ENCODE measurements at regions of chr14 and their contacts with region 1.

Region 1: DNA sequence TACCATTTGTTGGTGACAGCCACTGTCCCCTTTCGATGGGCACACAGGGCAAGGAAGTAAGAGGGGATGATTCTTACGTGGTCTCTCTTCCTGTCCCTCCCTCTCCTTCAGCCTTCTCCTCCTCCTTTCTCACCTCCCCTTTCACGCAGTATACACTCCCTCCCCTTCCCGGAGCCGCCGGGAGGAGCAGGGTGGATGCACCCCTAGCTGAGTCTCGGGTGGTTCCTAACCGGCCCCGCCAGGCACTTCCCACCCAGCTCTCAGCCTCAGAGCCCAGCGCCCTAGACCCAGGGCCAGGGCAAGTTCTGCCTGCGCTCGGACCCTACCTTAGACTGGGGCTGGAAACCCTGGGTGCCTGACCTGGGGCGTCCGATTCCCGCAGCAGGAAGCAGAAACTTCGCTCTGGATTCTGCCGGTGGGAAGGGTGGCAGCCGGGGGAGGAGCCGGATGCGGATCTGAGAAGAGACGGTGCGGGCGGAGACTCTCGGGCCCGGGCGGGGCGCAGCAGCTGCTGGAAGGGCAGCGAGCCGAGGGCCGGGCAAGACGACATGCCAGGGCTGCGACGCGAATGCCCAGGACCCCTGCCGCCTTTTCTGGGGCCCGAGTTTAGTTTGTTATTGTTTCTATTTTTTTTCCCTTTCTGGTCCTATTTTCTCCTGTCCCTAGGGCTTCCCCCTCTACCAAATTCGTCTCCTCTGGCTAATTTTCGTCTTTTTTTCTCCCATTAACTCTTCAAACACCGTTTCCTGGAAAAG is at the start of gene TEP1:
- DNase-seq: peak; percentile 69
- H3K4me3 Mint-ChIP-seq: peak within 1 kb of the TSS; percentile 100
- H3K27ac Mint-ChIP-seq: peak within 1 kb of the TSS; percentile 99
- H3K4me1 Mint-ChIP-seq: peaks cover 40% of the 10 kb centered on the region
- H3K27me3 Mint-ChIP-seq: no peaks in the 10 kb centered on the region
- total RNA-seq, gene TEP1: 39.3 and 41.9 TPM in 2 replicates

Region 2: GRCh38 chr14:20327005-20327869 is 86.0 kb before region 1 on chr14:
- intact Hi-C with region 1: loop called (anchors 1 kb)
- DNase-seq: peak; percentile 22
- H3K4me3 Mint-ChIP-seq: peak overlapping the region; percentile 9
- H3K27ac Mint-ChIP-seq: peak overlapping the region; percentile 13
- H3K4me1 Mint-ChIP-seq: peaks cover 52% of the 10 kb centered on the region
- H3K27me3 Mint-ChIP-seq: no peaks in the 10 kb centered on the region

Region 3: DNA sequence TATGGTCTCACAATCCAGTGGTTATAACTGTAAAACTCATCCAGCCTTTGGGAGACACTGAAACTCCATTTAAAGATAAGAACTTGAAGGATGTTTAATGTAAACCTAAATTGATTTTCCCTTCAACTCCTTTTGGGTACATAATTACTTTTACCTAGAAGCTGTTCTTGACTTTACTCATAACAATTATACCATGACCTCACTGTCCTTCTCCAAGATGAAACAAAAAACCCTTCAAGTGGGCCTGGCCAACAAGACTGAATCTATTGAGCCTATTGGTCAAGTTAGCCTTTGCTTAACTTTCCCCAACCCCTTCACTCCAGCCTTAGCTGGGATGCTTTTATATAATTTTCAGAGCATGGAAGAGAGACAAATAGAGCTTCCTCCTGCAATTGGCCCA is 47.3 kb before region 1 on chr14:
- intact Hi-C with region 1: loop called (anchors 1 kb)
- DNase-seq: no peak
- H3K4me3 Mint-ChIP-seq: no peak overlapping the region
- H3K27ac Mint-ChIP-seq: peak overlapping the region; percentile 15
- H3K4me1 Mint-ChIP-seq: peaks cover 10% of the 10 kb centered on the region
- H3K27me3 Mint-ChIP-seq: no peaks in the 10 kb centered on the region

Region 4: DNA sequence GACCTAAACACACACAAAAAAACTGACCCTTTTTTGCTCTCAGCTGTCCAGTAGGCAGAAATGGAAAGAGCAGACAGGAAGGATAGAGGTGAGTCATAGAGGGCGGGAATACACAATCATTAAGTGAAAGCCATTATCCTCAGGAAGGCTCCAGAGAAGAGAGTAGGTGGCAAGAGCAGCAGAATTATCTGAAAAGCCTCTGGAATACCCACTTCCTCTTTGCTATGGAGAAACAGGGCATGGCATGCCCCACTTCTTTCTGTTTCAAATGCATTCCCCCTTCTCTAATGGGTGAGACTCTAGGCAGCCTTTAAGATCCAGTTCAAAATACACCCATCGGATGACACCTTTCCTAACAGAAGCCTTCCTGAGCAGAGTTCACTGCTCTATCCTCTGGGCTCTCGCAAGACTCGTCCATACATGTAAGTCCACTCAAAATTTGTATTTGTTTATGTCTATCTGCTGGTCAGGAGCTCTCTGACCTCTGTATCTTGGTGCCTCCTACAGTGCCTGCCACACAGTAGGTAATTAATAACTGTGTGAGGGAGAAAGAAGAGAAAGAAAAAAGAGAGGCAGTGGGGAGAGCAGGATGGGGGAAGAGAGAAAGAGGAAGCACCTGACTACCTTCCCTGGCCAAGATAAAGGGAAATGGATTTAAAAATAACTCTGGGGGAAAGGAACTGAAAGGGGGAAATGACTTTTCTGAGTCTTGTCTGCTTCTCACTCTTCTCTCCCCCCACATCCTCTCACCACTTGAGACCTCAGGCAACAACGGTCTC is 14.2 kb after region 1 on chr14:
- intact Hi-C with region 1: loop called (anchors 1 kb)
- DNase-seq: no peak
- H3K4me3 Mint-ChIP-seq: peak overlapping the region; percentile 13
- H3K27ac Mint-ChIP-seq: peak overlapping the region; percentile 83
- H3K4me1 Mint-ChIP-seq: peaks cover 27% of the 10 kb centered on the region
- H3K27me3 Mint-ChIP-seq: peaks cover 4% of the 10 kb centered on the region

Region 5: GRCh38 chr14:20461274-20462001 is 48.2 kb after region 1 on chr14 and contains the start of gene PIP4P1:
- intact Hi-C with region 1: loop called (anchors 1 kb)
- DNase-seq: peak; percentile 99
- H3K4me3 Mint-ChIP-seq: peak within 1 kb of the TSS; percentile 94
- H3K27ac Mint-ChIP-seq: peak within 1 kb of the TSS; percentile 87
- H3K4me1 Mint-ChIP-seq: peaks cover 23% of the 10 kb centered on the region
- H3K27me3 Mint-ChIP-seq: no peaks in the 10 kb centered on the region
- total RNA-seq, gene PIP4P1: 36.6 and 37.0 TPM in 2 replicates

Measured in activated T-helper 1 cell treated with anti-CD3 and anti-CD28 coated beads, Interleukin-12 subunit alpha, Interleukin-12 subunit beta, Interleukin-2, Interleukin-4 antibody, amounts not matched to agents 30 ng/mL and 10 ng/mL and 1 ng/mL, durations not matched to agents 14 hours and 24 hours and 36 hours (primary cell).